Right cardiac atrium (tissue), 5 donors: ENCODE measurements at regions of chr12 and their contacts with region 1.

Region 1: DNA sequence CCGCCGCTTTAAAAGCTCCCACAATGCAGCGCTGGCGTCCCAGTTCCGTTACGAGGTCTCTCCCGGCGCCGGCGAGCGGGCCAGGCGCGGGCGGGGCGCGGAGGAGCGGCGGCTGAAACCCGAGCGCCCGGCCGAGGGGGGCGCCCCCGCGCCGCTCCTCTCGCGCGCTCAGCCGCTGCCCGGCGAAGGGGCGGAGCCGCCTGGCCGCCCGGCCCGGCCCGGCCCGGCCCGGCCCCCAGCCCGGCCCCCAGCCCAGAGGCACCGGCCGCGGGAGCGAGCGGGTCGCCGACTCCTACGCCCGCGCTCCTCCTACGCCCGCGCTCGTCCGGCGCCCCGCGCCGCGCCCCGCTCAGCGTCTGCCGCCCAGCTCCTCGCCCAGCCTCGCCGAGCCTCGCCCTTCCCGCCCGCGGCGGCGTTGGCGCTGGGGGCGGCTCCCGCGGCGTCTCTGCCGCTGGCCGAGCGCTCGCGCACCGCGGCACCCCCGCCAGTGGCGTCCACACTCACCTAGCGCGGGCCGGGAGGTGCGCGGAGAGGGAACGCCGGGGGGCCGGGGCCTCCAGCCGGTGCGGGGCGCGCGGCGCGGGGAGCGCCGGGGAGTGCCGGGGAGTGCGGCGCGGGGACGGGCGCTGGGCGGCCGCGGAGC is at the start of gene RASSF8:
- DNase-seq: peak; percentile 82 to 94 (median 93)
- ATAC-seq: peak; percentile 87 to 94
- H3K4me3 ChIP-seq: peak within 1 kb of the TSS; percentile 93
- H3K27ac ChIP-seq: peak within 1 kb of the TSS; percentile 96
- H3K4me1 ChIP-seq: peaks cover 4% of the 10 kb centered on the region
- H3K27me3 ChIP-seq: no peaks in the 10 kb centered on the region
- total RNA-seq, gene RASSF8: 62.1 to 94.6 (median 79.5) TPM

Region 2: GRCh38 chr12:25583545-25583944 is 375.0 kb before region 1 on chr12:
- intact Hi-C with region 1: loop called in 1 of 4 experiments (anchors 10 kb)
- DNase-seq: peak; percentile 33 to 72 (median 52)
- ATAC-seq: peak; percentile 93 to 97
- H3K4me3 ChIP-seq: no peak overlapping the region
- H3K27ac ChIP-seq: peak overlapping the region; percentile 30
- H3K4me1 ChIP-seq: peaks cover 2% of the 10 kb centered on the region
- H3K27me3 ChIP-seq: no peaks in the 10 kb centered on the region

Region 3: DNA sequence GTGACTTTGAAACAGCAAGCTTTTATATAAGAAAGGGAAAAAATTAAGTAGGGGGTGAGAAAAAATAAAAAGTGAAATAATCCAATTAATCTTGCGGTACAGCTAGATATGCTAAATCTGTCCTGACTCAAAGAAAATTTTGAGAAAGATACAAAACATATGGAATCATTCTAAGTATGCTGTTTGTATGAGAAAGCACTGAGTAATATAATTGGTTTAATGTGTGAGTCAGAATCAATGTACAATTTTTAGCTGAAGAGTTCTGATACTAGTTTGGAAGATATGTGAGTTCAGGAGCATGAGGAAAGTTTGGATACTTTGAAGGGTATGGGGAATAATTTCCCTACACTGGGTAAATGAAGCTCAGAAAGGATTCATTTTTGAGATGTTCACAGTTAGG is 190.9 kb before region 1 on chr12:
- intact Hi-C with region 1: no loop called
- DNase-seq: no peak
- ATAC-seq: no peak
- H3K4me3 ChIP-seq: no peak overlapping the region
- H3K27ac ChIP-seq: no peak overlapping the region
- H3K4me1 ChIP-seq: no peaks in the 10 kb centered on the region
- H3K27me3 ChIP-seq: no peaks in the 10 kb centered on the region

Region 4: DNA sequence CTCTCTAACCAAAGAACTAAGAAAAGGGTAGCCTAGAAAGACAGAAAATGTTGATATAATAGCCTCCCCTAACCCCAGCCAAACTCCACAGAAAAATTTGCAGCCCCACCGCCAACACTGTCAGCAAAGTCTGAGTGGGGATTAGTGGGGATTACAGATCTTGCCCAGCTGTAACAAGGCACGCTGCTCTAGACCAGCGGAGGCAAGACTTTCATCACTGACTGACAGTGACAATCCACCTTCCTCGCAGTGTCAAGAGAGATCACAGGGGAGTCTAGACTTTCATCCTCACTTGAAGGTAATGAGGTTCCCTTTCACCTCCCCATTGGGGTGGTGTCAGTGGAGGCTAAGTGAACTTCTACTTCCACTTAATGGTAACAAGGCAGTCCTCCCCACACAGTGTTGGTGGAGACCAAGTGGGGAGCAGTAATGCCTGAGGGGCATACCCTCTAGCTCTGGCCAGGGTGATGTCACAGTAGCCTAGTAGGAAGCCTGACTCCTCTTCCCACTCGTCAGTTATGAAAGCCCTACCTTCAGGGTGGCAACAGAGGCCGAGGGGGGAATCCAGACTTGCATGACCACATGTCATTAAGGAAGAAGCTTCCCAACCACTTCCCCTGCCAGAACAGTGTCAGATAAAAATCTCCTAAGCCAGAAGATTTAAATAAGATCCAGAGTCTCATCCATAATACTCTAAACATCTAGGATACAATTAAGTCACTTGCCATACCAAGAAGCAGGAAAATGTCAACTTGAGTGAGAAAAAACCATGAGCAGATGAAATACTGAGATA is 91.8 kb before region 1 on chr12:
- intact Hi-C with region 1: no loop called
- DNase-seq: no peak
- ATAC-seq: no peak
- H3K4me3 ChIP-seq: no peak overlapping the region
- H3K27ac ChIP-seq: no peak overlapping the region
- H3K4me1 ChIP-seq: no peaks in the 10 kb centered on the region
- H3K27me3 ChIP-seq: no peaks in the 10 kb centered on the region

Region 5: GRCh38 chr12:26011099-26011498 is 52.5 kb after region 1 on chr12:
- intact Hi-C with region 1: loop called in 2 of 4 experiments (anchors 5 kb)
- DNase-seq: no peak
- ATAC-seq: peak; percentile 91 to 93
- H3K4me3 ChIP-seq: no peak overlapping the region
- H3K27ac ChIP-seq: peak overlapping the region; percentile 81
- H3K4me1 ChIP-seq: peaks cover 23% of the 10 kb centered on the region
- H3K27me3 ChIP-seq: no peaks in the 10 kb centered on the region

Region 6: DNA sequence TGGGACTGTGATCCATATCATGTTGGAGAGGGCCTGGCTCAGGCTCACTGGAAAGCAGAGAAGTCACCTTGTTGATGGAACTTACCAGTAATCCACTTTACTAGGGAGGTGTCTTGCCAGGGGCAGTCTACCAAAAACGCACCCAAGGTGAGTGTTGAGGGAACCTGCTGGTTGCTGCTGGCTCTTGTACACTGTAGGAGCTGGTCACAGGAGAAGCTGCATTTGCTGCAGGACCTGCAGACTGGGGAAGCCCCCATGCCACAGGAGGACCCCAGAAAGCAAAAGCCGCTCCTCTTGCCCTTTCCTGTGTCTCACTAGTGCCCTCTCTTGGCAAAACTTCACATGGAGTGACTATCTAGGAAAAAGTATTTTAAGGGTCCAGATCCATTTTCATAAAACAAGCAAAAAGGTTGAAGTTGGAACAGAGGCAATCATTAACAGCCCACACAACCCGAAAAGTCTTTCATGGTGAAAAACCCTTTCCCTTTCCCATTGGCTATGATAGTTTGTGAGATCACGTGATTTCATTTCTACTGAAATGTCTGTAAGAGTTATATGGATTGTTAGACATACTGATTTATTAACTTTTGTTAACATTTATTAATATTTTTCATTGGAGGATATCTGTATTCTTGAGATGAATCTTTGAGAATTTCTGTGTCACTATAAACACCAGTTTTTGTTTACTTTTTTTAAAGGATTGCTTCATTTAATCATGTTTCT is 59.1 kb after region 1 on chr12:
- intact Hi-C with region 1: loop called in 2 of 4 experiments (anchors 5 kb)
- DNase-seq: no peak
- ATAC-seq: peak; percentile 44 to 51
- H3K4me3 ChIP-seq: no peak overlapping the region
- H3K27ac ChIP-seq: no peak overlapping the region
- H3K4me1 ChIP-seq: peaks cover 14% of the 10 kb centered on the region
- H3K27me3 ChIP-seq: no peaks in the 10 kb centered on the region

Region 7: DNA sequence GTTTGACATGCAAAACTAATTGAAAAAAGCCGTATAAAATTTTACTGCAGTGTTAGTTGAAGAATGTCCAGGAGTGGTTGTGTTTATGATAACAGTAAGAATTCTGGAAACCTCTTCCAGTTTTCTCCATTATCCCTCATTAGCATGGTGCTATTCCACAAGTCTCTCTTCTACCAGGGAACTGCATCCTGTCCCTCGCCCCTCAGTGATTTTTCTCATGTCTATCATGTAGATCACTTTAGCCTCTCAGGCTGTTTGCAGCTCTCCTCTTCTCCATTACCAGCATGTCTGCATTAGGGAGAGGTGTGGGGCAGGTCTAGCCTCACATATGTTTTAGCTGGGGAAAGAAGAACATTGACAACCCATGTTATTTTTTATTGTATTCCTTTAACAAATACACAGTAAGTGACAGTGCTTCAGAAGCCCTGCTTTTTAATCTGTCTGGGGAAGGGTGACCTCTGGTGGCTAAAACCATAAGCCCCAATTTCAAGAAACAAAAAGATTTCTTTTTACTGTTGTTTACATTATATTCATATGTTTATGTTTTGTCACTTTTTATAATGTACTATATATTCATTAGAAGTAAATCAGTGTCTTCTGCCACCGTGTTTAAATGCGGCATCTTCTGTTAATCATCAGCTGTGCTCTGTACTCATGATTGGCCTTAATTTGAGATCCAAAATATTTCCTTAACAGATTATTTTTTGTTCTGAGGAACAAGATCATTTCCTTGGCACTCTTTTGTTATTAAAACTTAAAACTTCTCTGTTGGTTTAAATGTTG is 70.6 kb after region 1 on chr12:
- intact Hi-C with region 1: loop called in 2 of 4 experiments (anchors 5 kb)
- DNase-seq: no peak
- ATAC-seq: peak; percentile 56 to 71
- H3K4me3 ChIP-seq: no peak overlapping the region
- H3K27ac ChIP-seq: no peak overlapping the region
- H3K4me1 ChIP-seq: peaks cover 6% of the 10 kb centered on the region
- H3K27me3 ChIP-seq: no peaks in the 10 kb centered on the region

Region 8: DNA sequence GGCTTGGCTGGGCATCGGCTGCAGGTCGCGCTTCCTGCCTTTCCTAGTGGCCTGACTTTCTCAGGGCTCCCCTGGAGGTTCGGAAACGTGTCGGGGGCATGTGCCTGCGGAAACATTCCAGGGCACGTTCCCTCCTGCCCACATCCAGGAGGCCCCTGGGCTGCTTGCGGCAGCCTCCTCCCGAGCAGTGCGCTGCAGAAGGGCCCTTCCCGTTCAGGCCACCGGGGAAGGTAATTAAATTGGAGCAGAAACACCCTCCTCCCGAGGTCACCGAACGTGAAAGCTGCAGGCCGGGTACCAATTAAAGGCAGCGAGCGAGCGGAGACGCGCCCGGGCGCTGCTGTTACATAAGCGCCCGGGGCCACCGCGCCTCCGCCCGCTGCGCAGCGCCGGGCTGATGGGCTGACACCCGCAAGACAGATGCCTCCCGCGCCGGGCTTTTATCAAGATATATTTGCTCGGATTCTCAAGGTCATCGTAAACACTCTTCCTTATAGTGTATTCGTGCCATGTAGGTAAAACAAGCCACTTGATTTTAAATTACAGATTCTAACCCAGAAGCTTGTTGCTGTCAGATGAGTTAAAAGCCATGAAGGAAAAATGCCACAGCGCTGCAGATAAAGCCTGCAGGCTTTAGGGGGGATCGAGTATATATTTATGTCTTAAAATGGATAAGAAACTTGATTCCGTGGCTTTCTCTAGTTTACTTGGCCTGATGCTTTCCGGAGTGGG is 268.2 kb after region 1 on chr12:
- intact Hi-C with region 1: no loop called
- DNase-seq: peak; percentile 28 to 83 (median 73)
- ATAC-seq: peak; percentile 84
- H3K4me3 ChIP-seq: peak overlapping the region; percentile 52
- H3K27ac ChIP-seq: peak overlapping the region; percentile 34
- H3K4me1 ChIP-seq: peaks cover 3% of the 10 kb centered on the region
- H3K27me3 ChIP-seq: no peaks in the 10 kb centered on the region